BJ (cell line): ENCODE measurements at regions of chr11 and their contacts with region 1.

Region 1: DNA sequence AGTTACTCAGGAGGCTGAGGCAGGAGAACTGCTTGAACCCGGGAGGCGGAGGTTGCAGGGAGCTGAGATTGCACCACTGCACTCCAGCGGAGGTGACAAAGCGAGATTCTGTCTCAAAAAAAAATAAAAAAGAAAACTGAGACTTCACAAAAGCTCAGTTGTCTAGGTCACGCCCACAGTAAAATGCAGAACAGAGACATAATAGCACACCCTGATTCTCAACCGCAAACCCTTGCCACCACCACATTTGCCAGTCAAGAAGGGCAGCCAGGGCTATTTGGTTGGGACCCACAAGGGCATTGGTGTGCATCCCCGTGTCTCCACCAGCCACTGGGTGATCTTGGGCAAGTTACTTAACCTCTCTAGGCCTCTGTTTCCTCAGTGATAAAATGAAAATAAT is 25.4 kb downstream of the CREB3L1 start:
- DNase-seq: no peak
- H3K4me3 ChIP-seq: no peak overlapping the region
- H3K27me3 ChIP-seq: no peaks in the 10 kb centered on the region
- CTCF ChIP-seq: no peak

Region 2: DNA sequence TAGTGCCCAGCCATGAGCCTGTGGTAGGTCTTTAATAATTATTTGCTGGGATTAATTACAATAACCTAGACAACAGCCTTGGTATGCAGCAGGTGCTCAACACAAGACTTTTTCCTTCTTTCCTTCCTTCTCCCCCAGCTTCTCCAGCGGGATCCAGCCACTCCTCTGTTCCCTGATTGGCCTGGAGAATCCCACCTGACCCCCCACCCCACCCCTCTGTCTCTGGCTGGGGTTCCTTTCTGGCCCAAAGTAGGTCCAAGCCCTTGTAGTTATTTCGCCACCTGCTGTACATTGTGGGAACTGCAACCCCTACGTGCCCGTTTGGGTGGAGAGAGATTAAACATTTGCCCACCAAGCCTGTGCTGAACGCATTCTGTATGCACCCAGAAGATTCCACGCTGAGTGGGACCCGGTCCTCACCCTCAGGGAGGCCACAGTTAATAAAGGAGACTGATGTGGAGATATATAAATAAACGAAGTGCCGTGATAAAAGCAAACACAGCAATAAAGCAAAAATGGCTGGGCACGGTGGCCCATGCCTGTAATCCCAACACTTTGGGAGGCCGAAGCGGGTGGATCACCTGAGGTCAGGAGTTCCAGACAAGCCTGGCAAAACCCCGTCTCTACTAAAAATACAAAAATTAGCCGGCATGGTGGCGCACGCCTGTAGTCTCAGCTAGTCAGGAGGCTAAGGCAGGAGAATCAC is 12.3 kb after region 1 on chr11:
- CTCF ChIA-PET with region 1: interaction called, 90 read pairs
- POLR2A ChIA-PET with region 1: no interaction called
- DNase-seq: no peak
- H3K4me3 ChIP-seq: no peak overlapping the region
- H3K27me3 ChIP-seq: no peaks in the 10 kb centered on the region
- CTCF ChIP-seq: peak; percentile 88